ENCODE measurements at regions of chr7 and their contacts with region 1.

Region 1: DNA sequence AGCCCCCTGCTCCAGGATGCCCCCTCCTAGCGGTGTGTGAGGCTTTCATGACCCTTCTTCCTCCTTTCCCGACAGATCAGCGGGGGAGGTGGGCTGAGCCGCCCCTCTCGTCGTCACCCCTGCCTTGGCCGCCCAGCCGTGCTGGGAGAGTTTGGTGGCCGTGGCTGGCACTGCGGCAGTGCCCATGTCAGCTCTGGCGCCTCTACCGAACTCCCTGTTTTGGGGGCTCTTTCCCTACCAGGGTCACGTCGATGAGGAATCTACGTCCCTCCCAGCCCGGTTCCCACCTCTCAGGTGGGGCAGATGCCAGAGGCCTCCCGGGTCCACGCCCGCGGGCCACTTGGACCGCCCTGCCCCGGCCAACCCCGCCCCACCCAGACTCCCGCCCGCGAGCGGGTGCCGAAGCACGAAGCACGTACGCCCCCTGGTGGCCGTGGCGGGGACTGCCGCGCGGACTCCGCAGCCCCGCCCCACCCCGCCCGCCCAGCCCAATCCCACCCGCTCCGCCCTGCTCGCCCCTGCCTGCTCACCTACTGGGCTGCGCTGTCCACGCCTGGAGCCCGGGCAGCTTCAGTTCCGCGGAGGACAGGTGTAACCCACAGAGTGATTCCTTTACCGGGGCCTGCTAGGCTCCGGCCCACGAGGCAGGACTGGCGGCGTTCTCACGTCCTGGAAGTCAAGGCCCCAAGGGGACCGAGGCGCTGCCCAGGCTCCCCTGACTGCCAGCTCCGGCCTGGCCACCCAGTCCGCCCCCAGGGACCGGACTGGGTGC is 127.1 kb downstream of the UBE2H start:
- DNase-seq: peak; percentile 65 to 97 (median 90)

Region 2: DNA sequence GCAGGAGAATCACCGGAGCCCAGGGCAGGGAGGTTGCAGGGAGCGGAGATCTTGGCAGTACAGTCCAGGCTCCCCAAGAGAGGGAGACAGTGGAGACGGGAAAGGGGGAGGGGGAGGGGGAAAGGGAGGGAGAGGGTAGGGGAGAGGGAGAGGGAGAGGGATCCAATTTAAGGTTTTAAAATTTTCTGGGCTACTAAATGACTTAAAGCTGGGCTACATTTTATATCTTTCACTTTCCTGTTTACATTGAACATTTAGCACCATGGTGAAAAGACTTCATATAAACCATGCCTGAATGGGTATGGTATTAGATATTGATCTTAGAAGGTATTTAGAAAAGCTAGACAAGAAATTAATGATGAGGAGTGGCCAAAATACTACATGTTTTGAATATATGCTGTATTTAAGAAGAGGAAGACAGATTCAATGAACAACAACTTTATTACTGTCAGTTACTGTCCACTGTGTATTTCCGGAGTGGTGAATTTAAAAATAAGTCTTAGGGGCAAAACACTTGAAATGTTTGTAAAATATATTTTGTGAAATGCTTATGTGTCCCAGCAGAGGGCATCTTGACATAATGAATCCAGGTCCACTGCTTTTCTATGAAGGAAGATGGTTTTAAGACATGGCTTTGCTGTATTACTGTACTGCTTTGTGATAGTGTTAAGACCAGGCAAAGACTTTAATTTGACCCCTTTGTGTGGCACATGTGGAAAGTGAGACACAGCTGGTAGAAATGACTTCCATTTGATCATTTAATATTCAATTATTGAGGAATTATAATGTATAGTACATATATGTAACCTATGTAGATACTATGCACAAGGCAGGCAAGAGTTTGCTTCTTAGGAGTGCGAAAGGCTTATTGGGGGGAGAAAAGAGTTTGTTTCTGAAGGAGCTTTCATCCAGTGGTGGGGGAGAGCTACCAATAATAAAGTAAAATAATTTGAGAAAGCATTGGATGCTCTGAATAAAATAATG is 161.4 kb before region 1 on chr7:
- intact Hi-C with region 1: loop called (anchors 5 kb)
- DNase-seq: peak in 1 of 42 donors; percentile 33

Region 3: DNA sequence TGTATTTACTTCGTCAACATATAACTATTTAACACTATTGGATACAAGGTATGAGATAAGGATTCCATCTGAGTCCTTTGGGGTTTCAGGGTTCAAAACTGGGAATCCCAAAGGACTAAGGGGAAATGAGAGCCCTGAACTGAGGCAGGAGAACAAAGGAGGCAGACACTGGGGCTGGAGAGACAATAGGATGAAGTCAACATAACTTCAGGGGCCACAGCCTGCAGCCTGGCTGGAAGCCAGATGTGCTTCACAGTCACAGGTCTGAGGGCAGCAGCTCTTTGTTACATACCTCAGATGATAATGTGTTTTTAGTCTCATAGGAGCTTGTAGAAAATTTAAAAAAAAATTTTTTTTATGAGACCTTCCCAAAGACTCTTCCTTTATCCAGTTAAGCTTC is 140.9 kb before region 1 on chr7:
- intact Hi-C with region 1: no loop called
- DNase-seq: peak in 3 of 42 donors; percentile 4 to 46 (median 16)

Region 4: GRCh38 chr7:129952653-129953560 is 127.2 kb after region 1 on chr7 and contains the start of gene UBE2H:
- intact Hi-C with region 1: loop called (anchors 5 kb)
- DNase-seq: peak; percentile 87 to 98 (median 96)

Region 5: GRCh38 chr7:130010689-130011412 is 185.2 kb after region 1 on chr7:
- intact Hi-C with region 1: loop called (anchors 5 kb)
- DNase-seq: peak; percentile 28 to 94 (median 84)

Measured in head of caudate nucleus (tissue), 42 donors.